GM13976 (cell line): ENCODE measurements at regions of chrX and their contacts with region 1.

Region 1: GRCh38 chrX:140141444-140142029 is 176.2 kb upstream of the CXorf66 start:
- DNase-seq: peak; percentile 42
- CTCF ChIP-seq: peak; percentile 42

Region 2: GRCh38 chrX:140071037-140071436 is 70.5 kb before region 1 on chrX:
- in situ Hi-C with region 1: loop called (anchors 5 kb)
- DNase-seq: no peak
- CTCF ChIP-seq: no peak

Region 3: DNA sequence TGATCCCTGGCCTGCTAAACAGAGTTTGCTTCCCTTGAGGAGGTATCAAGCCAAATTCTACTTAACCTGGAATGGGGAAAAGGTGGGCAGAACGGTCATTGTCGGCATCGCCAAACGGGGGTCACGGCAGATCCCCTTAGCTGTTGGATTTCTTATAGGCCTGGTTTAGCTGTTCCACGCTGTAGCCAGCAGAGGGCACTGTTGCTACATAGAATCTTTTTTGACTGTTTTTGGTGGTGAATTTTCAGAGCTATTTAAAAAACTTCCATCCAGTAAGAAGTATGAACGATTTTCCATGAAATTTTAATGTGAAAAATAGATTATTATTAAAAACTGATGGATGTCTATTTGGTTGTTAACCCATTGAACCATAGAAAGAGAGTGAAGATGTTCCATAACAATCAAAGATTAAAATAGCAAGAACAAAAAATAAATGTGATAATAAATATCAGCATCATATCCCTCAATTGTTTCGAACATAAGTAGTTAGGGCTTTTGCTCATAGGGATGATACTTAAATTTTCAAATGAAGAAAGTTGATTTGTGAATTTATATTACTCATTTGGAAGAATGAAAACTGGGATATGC is 624.6 kb after region 1 on chrX:
- in situ Hi-C with region 1: no loop called
- DNase-seq: peak; percentile 34
- CTCF ChIP-seq: peak; percentile 78